Motor neuron (in vitro differentiated cells): ENCODE measurements at regions of chr15 and their contacts with region 1.

Region 1: GRCh38 chr15:55993111-55993803 is at the start of gene NEDD4:
- ATAC-seq: peak; percentile 84 to 95 (median 90)
- H3K4me3 ChIP-seq: peak within 1 kb of the TSS; percentile 75 to 97 (median 78)
- H3K27ac ChIP-seq: peak within 1 kb of the TSS; percentile 74 to 77
- H3K4me1 ChIP-seq: peaks cover 18 to 26% of the 10 kb centered on the region in 2 donors
- total RNA-seq, gene NEDD4: 5.2 to 14.0 (median 11.1) TPM

Region 2: GRCh38 chr15:56052395-56053045 is 59.3 kb after region 1 on chr15:
- in situ Hi-C with region 1: loop called in 1 of 9 experiments (anchors 10 kb)
- ATAC-seq: peak in 7 of 8 experiments; percentile 46 to 68 (median 64)
- H3K4me3 ChIP-seq: no peak overlapping the region
- H3K27ac ChIP-seq: no peak overlapping the region
- H3K4me1 ChIP-seq: peaks cover 7 to 11% of the 10 kb centered on the region in 2 donors